ENCODE measurements at regions of chr20 and their contacts with region 1.

Region 1: DNA sequence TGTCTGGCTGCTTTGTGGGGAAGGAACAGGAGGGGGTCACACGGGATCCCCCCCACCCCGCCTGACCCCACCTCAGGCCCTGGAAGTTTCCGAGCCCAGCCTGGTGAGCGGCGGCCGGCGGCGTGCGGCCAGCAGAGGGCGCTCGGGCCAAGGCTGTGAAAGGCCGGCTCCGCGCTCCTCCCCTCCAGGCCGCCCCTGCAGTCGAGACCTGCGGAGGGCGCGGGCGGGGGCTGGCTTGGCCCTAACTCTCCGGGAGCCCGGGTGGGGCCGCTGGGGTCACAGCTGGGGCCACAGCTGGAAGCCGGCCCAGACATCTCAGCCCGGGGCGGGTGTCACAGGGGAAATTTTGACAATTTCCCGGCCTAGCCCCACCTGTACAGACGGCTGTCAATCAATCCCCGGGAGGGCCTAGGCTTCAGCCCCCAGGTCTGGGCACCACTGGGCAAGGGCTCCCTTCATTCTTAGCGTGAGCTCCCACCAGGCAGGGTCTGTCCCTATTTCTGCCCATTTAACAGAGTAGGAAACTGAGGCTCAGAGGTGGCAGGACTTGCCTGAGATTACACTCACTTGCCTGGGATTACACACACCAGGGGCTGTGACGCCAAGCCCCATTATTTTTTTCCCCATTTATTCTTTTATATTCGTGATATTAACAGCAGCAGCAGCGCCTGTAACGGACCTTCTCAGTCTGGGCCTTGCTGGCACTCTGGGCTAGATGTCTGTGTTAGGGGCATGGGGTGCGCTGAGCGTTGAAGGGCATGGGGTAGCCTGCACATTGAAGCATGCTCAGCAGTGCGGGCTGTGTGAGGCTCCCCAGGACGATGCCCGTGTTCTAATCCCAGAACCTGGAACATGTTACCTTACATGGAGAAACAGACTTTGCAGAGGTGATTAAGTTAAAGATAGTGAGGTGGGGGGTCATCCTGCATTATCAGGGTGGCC is 23.0 kb downstream of the ZBP1 start:
- DNase-seq: peak; percentile 64
- H3K4me3 ChIP-seq: no peak overlapping the region
- H3K27ac ChIP-seq: no peak overlapping the region
- H3K4me1 ChIP-seq: no peaks in the 10 kb centered on the region
- H3K27me3 ChIP-seq: no peaks in the 10 kb centered on the region
- CTCF ChIP-seq: peak; percentile 85

Region 2: GRCh38 chr20:57498425-57499400 is 98.6 kb before region 1 on chr20:
- CTCF ChIA-PET with region 1: no interaction called
- POLR2A ChIA-PET with region 1: no interaction called
- intact Hi-C with region 1: loop called (anchors 5 kb)
- DNase-seq: peak; percentile 46
- H3K4me3 ChIP-seq: no peak overlapping the region
- H3K27ac ChIP-seq: no peak overlapping the region
- H3K4me1 ChIP-seq: peaks cover 5% of the 10 kb centered on the region
- H3K27me3 ChIP-seq: peaks cover 7% of the 10 kb centered on the region
- CTCF ChIP-seq: peak; percentile 42

Region 3: DNA sequence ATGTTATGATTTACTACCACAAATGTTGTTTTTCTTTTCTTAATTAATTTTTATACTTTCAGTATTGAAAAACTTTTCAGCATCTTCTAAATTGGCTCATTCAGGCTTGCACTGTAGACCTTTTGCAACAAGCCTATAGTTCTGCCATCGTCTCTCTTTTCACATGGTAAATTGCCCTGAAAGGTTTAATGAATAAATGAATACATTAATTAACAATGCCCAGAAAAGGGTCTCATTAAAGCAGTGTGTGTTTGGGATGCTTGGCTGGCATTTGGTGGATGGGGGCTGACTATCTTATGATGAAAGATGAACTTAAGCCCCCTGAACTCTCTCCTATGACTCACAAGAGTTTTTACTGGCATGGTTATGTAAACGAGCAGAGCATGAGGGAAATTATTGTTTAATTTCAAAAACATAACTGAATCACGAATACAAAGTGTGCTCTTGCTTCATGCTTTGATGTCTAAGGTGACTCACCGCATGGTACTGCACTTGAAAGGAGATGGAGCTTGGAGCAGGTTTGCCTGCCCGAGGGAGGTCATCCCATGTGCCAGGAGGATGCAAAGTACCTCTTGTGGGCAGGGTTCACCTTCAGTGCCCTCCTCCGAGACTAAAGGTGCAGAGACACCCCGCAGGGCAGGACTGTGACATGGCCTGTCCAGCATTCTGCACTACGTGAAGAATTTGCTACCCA is 50.2 kb before region 1 on chr20:
- CTCF ChIA-PET with region 1: no interaction called
- POLR2A ChIA-PET with region 1: interaction called, 11 read pairs
- intact Hi-C with region 1: no loop called
- DNase-seq: no peak
- H3K4me3 ChIP-seq: no peak overlapping the region
- H3K27ac ChIP-seq: no peak overlapping the region
- H3K4me1 ChIP-seq: no peaks in the 10 kb centered on the region
- H3K27me3 ChIP-seq: no peaks in the 10 kb centered on the region
- CTCF ChIP-seq: no peak

Region 4: DNA sequence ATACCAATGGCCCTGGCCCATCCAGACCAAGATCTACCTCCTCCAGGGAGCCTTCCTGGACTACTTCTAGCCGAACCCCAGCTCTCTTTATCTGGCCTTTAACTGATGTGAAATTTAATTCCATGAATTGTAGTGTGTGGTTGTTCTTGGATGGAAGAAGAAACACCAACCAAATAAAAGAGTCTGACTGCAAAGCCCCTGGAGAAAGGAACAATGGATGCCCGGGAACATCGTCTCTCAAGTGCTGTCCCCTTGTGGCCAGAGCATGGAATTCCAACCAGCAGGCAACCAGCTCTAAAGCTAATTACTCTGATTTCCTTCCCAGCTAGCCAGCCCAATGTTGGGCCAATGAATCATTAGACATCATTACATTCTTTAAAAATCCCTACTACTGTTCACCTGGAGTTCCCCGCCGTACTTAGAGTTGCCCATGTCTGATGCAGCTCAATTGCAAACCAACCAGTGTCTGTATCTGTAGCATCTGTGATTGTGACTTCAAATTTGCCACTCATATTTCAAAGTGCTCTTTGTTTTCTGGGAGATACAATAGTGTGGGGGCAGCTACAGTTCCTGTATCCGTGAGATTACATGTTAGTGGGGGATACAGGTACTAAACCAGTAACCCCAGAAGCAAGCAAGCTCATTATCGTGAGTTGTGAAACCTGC is 490.1 kb after region 1 on chr20:
- CTCF ChIA-PET with region 1: no interaction called
- POLR2A ChIA-PET with region 1: no interaction called
- intact Hi-C with region 1: loop called (anchors 1 kb)
- DNase-seq: peak; percentile 71
- H3K4me3 ChIP-seq: no peak overlapping the region
- H3K27ac ChIP-seq: no peak overlapping the region
- H3K4me1 ChIP-seq: no peaks in the 10 kb centered on the region
- H3K27me3 ChIP-seq: no peaks in the 10 kb centered on the region
- CTCF ChIP-seq: peak; percentile 88